CD8-positive, alpha-beta T cell (primary cell): ENCODE measurements at regions of chr9 and their contacts with region 1.

Region 1: DNA sequence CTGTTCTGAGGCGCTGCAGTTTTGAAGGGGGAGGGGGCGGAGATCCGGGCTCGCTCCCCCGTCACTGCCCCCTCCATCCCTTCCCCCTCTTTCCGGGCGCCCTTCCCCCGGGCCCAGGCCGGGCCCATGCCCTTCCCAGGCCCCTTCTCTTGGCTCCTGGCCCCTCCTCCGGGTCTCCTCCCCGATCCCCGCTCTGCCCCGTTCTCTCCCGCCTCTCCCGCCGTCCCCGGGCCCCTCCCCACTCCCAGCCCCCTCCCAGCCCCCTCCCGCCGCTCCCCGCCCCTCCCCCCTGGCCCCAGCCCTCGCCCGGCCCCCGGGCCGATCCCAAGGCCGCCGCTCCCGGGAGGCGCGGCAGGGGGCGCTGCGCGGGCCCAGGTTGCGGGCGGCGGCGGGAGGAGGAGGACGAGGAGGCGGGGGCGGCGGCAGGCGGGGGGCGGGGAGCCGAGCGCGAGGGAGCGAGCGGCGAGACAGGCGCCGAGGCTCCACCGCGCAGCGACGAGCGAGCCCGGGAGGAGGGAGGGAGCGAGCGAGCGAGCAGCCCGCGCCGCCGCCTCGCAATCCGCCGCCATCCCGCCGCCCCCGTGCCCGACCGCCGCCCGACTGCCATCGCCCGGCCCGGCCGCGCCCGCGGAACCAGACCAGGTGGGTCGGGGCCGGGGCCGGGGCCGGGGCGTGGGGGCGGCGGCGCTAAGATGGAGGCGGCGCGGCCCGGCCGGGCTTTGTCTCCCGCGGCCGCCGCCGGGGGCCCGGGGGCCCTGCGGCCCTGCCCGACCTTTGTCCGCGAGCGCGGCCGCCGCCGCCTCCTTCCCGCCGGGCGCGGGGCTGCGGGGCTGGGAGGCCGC is at the start of gene PRRC2B:
- DNase-seq: peak; percentile 68 to 93 (median 85)
- ATAC-seq: peak; percentile 49
- H3K4me3 ChIP-seq: peak within 1 kb of the TSS; percentile 57 to 63
- H3K4me3 Mint-ChIP-seq: peak within 1 kb of the TSS; percentile 92
- H3K27ac ChIP-seq: peak within 1 kb of the TSS; percentile 70 to 78
- H3K27ac Mint-ChIP-seq: peak within 1 kb of the TSS; percentile 97
- H3K4me1 ChIP-seq: peaks cover 44% of the 10 kb centered on the region
- H3K4me1 Mint-ChIP-seq: peaks cover 49% of the 10 kb centered on the region
- H3K27me3 ChIP-seq: no peaks in the 10 kb centered on the region
- H3K27me3 Mint-ChIP-seq: no peaks in the 10 kb centered on the region
- CTCF ChIP-seq: peak; percentile 36
- total RNA-seq, gene PRRC2B: 234 to 251 TPM

Region 2: GRCh38 chr9:131270171-131271015 is 123.5 kb before region 1 on chr9:
- CTCF ChIA-PET with region 1: no interaction called
- POLR2A ChIA-PET with region 1: interaction called, 4 read pairs
- intact Hi-C with region 1: loop called (anchors 1 to 5 kb)
- DNase-seq: peak in 6 of 9 experiments; percentile 38 to 82 (median 62)
- ATAC-seq: peak; percentile 7
- H3K4me3 ChIP-seq: peak overlapping the region; percentile 90 to 95
- H3K4me3 Mint-ChIP-seq: peak overlapping the region; percentile 98
- H3K27ac ChIP-seq: peak overlapping the region; percentile 84 to 93
- H3K27ac Mint-ChIP-seq: peak overlapping the region; percentile 94
- H3K4me1 ChIP-seq: peaks cover 60% of the 10 kb centered on the region
- H3K4me1 Mint-ChIP-seq: peaks cover 70% of the 10 kb centered on the region
- H3K27me3 ChIP-seq: no peaks in the 10 kb centered on the region
- H3K27me3 Mint-ChIP-seq: no peaks in the 10 kb centered on the region
- CTCF ChIP-seq: no peak

Region 3: GRCh38 chr9:131349881-131350563 is 43.8 kb before region 1 on chr9:
- CTCF ChIA-PET with region 1: interaction called, 6 read pairs
- POLR2A ChIA-PET with region 1: no interaction called
- intact Hi-C with region 1: loop called in 1 of 2 experiments (anchors 1 kb)
- DNase-seq: peak; percentile 75 to 93 (median 88)
- ATAC-seq: peak; percentile 99
- H3K4me3 ChIP-seq: no peak overlapping the region
- H3K4me3 Mint-ChIP-seq: peak overlapping the region; percentile 43
- H3K27ac ChIP-seq: no peak overlapping the region
- H3K27ac Mint-ChIP-seq: peak overlapping the region; percentile 49
- H3K4me1 ChIP-seq: peaks cover 9% of the 10 kb centered on the region
- H3K4me1 Mint-ChIP-seq: peaks cover 6% of the 10 kb centered on the region
- H3K27me3 ChIP-seq: no peaks in the 10 kb centered on the region
- H3K27me3 Mint-ChIP-seq: peaks cover 3% of the 10 kb centered on the region
- CTCF ChIP-seq: peak; percentile 81

Region 4: GRCh38 chr9:131459056-131459455 is 65.2 kb after region 1 on chr9:
- CTCF ChIA-PET with region 1: no interaction called
- POLR2A ChIA-PET with region 1: no interaction called
- intact Hi-C with region 1: loop called in 1 of 2 experiments (anchors 10 kb)
- DNase-seq: no peak
- ATAC-seq: no peak
- H3K4me3 ChIP-seq: no peak overlapping the region
- H3K4me3 Mint-ChIP-seq: no peak overlapping the region
- H3K27ac ChIP-seq: no peak overlapping the region
- H3K27ac Mint-ChIP-seq: peak overlapping the region; percentile 15
- H3K4me1 ChIP-seq: no peaks in the 10 kb centered on the region
- H3K4me1 Mint-ChIP-seq: peaks cover 19% of the 10 kb centered on the region
- H3K27me3 ChIP-seq: no peaks in the 10 kb centered on the region
- H3K27me3 Mint-ChIP-seq: no peaks in the 10 kb centered on the region
- CTCF ChIP-seq: no peak

Region 5: GRCh38 chr9:131530920-131531832 is 137.3 kb after region 1 on chr9 and contains the start of gene UCK1:
- CTCF ChIA-PET with region 1: no interaction called
- POLR2A ChIA-PET with region 1: no interaction called
- intact Hi-C with region 1: loop called in 1 of 2 experiments (anchors 10 kb)
- DNase-seq: peak; percentile 42 to 89 (median 68)
- ATAC-seq: peak; percentile 91
- H3K4me3 ChIP-seq: peak within 1 kb of the TSS; percentile 64 to 73
- H3K4me3 Mint-ChIP-seq: peak within 1 kb of the TSS; percentile 74
- H3K27ac ChIP-seq: peak within 1 kb of the TSS; percentile 51 to 53
- H3K27ac Mint-ChIP-seq: peak within 1 kb of the TSS; percentile 55
- H3K4me1 ChIP-seq: peaks cover 35% of the 10 kb centered on the region
- H3K4me1 Mint-ChIP-seq: peaks cover 35% of the 10 kb centered on the region
- H3K27me3 ChIP-seq: no peaks in the 10 kb centered on the region
- H3K27me3 Mint-ChIP-seq: no peaks in the 10 kb centered on the region
- CTCF ChIP-seq: no peak
- total RNA-seq, gene UCK1: 22.6 to 24.7 TPM

Region 6: GRCh38 chr9:132354637-132355355 is 961.0 kb after region 1 on chr9 and contains the start of gene SETX:
- CTCF ChIA-PET with region 1: no interaction called
- POLR2A ChIA-PET with region 1: no interaction called
- intact Hi-C with region 1: loop called in 1 of 2 experiments (anchors 10 kb)
- DNase-seq: peak; percentile 92 to 99 (median 97)
- ATAC-seq: peak; percentile 83
- H3K4me3 ChIP-seq: peak within 1 kb of the TSS; percentile 77 to 86
- H3K4me3 Mint-ChIP-seq: peak within 1 kb of the TSS; percentile 87
- H3K27ac ChIP-seq: peak within 1 kb of the TSS; percentile 94 to 97
- H3K27ac Mint-ChIP-seq: peak within 1 kb of the TSS; percentile 98
- H3K4me1 ChIP-seq: peaks cover 40% of the 10 kb centered on the region
- H3K4me1 Mint-ChIP-seq: peaks cover 44% of the 10 kb centered on the region
- H3K27me3 ChIP-seq: no peaks in the 10 kb centered on the region
- H3K27me3 Mint-ChIP-seq: no peaks in the 10 kb centered on the region
- CTCF ChIP-seq: no peak
- total RNA-seq, gene SETX: 37.5 to 40.7 TPM